Activated T-helper 2 cell treated with anti-CD3 and anti-CD28 coated beads, Interferon-gamma antibody, Interleukin-2, Interleukin-4, amounts not matched to agents 10 μg/mL and 5 μg/mL and 100 μg/mL, durations not matched to agents 14 hours and 24 hours and 36 hours (primary cell): ENCODE measurements at regions of chr2 and their contacts with region 1.

Region 1: DNA sequence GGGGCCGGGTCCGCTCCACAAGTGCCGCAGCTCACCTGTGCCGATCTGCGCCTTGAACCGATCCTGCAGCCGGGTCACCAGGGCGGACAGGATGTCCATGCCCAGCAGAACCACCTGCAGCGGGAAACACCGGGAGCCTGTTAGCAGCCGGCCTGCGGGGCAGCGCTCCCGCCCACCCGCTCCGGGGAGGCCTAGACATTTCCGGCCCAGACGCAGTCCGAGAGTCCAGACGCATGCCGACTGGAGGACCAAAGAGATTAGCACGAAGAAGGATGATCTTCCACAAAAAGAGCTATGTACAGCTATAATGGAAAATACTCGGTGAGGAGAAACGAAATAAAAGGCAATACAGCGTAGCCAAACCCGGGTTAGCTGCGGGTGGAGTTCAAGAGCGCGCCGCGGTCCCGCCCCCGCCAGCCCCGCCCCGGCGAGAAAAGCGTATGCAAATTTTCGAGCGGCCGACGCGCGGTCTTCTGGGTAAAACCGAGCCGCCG is 421 bp upstream of the RNU4ATAC start:
- DNase-seq: no peak
- H3K4me3 Mint-ChIP-seq: peak overlapping the region; percentile 96
- H3K27ac Mint-ChIP-seq: peak overlapping the region; percentile 99
- H3K4me1 Mint-ChIP-seq: peaks cover 53% of the 10 kb centered on the region
- H3K27me3 Mint-ChIP-seq: no peaks in the 10 kb centered on the region

Region 2: DNA sequence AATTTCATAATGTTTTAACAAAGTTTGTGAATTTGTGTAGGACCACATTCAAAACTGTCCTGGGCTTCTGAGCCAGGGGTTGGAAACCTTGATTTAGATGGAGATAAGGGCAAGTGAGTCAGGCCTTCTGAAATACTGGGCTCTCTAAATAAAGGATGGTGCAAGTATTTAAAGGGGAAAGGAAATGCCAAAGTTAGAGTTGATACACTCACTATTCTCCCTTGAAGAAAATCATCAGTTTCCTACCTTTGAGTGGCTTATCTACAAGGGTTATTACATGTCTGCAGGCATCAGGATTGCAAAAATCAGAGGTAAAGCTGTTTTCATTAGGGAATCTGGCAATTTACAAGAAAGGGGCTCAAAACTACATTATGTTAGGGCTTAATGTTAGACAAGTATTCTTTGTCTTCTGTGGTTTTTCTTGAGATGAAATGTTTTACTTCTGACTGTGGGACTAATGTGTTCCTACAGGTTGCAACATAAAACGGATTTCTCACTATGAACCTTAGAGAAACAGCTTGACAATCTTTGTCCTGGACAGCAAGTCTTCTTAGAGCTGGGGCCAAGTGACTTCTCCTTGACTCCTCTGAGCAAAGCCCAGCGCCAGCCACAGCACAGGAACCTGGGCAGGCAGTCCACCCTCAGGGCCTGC is 31.5 kb after region 1 on chr2:
- intact Hi-C with region 1: loop called (anchors 2 kb)
- DNase-seq: no peak
- H3K4me3 Mint-ChIP-seq: no peak overlapping the region
- H3K27ac Mint-ChIP-seq: peak overlapping the region; percentile 55
- H3K4me1 Mint-ChIP-seq: peaks cover 37% of the 10 kb centered on the region
- H3K27me3 Mint-ChIP-seq: no peaks in the 10 kb centered on the region

Region 3: GRCh38 chr2:121596221-121597080 is 66.2 kb after region 1 on chr2:
- intact Hi-C with region 1: loop called (anchors 2 kb)
- DNase-seq: no peak
- H3K4me3 Mint-ChIP-seq: peak overlapping the region; percentile 52
- H3K27ac Mint-ChIP-seq: peak overlapping the region; percentile 52
- H3K4me1 Mint-ChIP-seq: peaks cover 35% of the 10 kb centered on the region
- H3K27me3 Mint-ChIP-seq: no peaks in the 10 kb centered on the region

Region 4: DNA sequence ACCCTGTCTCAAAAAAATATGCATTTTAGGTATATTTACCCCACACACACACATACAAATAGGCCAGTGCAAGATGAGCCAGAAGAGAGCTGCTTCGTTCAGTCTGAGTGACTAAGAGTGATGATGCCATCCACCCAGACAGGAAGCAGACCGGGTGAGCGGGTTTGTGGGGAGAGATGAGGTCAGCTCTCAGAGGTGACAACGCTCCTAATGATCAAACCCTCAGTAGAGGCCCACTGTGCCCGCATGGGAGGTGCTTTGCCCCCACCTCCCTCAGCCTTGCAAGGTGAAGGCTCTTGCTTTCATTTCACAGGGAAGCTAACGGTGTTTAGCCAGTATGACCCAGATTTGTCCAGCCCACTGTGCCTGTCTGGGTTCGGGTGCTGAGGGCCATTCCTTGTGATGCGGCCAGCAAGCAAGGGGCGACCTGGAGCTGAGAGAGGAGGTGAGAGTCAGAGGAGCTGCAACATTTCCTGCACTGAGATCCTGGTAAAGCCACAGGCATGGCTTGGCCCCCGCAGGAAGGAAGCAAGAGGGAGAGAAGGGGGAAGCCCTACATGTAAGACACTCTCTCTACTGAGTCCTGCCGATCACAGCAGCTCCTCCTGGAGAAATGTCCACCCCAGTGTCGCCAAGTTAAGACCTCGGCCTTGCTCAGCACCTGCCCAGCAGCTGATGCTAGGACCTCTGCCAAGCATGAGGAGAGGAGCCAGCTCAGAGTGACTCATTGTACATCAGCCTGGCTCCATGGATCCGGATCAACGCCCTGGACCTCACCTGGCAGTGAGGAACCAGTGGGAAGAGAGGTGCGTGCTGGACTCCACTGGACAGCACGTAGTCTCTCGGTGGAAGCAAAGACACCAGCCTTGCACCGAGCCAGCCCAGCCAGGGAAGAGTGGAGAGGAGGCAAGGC is 169.4 kb after region 1 on chr2:
- intact Hi-C with region 1: loop called (anchors 1 kb)
- DNase-seq: peak; percentile 81
- H3K4me3 Mint-ChIP-seq: peak overlapping the region; percentile 75
- H3K27ac Mint-ChIP-seq: peak overlapping the region; percentile 91
- H3K4me1 Mint-ChIP-seq: peaks cover 46% of the 10 kb centered on the region
- H3K27me3 Mint-ChIP-seq: no peaks in the 10 kb centered on the region

Region 5: DNA sequence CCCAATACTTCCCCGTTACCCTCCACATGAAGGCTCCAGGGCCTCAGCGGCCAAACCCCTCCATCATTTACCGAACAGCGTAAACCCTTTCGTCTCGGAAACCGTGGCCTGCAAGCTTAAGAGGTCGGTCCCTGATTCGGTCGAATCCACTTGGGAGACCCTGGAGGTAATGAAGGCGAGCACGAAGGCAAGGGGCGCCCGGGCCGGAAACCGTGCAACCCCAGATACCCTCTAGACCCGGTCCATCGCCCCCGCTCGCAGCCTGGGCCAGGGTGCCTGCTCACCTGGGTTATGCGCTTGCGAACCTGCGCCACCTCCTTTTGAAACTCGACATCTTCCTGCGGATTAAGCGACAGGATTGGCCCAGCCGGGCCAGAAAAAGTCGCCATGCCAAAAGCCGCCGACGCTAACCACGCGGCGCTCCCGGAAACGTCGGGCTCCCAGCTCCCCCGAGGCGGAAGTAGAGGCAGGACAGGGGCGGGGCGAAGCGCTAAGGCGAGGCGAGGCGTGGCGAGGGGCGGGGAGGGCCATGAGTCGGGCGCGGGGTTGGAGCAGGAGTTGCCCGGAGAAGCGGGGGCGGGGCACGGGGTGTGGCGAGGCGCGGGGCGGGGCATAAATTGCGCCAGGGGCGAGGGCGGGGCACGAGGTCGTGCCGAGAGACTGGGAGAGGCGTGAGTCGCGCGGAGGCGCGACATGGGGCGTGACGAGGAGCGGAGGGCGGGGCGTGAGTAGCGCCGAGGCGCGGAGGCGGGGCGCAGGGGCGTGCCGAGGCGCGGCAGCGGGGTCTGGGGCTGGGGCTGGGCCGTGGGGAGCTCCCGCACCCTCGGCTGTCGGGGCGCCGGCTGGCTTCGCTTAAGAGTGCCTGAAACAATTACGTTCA is 206.4 kb after region 1 on chr2 and contains the start of gene NIFK:
- intact Hi-C with region 1: loop called (anchors 1 kb)
- DNase-seq: peak; percentile 99
- H3K4me3 Mint-ChIP-seq: peak within 1 kb of the TSS; percentile 99
- H3K27ac Mint-ChIP-seq: peak within 1 kb of the TSS; percentile 92
- H3K4me1 Mint-ChIP-seq: peaks cover 29% of the 10 kb centered on the region
- H3K27me3 Mint-ChIP-seq: no peaks in the 10 kb centered on the region
- total RNA-seq, gene NIFK: 117 and 125 TPM in 2 replicates